Mammary epithelial cell (primary cell): ENCODE measurements at regions of chr11 and their contacts with region 1.

Region 1: DNA sequence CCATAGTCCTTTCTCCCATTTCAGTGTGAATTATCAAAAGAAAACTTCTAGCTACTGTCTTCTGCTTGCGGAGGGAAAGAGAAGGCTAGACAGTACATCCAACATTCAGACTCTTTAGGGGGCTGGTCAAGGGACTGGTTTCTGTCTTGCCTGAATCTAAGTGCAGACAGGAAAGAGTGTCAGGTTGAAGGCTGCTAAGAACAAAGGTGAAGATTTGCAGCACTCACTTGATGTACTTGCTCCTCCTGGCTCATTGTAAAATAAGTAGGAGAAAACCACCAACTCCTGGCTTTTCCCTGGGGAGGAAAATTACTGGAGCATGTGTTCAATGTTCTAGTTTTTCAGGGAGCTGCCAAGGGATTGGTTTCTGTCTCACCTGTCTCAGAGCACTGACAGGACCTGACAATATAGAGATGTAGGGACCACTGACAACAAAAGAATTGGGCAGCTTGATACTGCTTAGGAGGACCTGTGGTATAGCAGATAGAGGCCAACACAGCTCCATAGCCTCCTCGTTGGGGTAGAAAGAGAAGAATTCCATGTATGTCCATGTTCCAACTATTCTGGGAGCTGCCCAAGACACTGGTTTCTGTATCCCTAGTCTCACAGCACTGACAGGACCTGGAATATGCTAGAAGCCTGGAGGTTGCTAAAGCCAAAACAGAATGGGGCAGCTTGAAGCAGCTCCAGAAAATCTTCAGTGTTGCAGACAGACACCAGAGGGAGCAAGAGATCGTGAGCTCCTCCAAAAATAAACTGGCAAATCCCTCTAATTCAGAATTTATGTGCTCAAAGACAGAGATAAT is 39.7 kb upstream of the MMP12 start:
- DNase-seq: peak; percentile 28
- H3K4me3 ChIP-seq: no peak overlapping the region
- H3K27ac ChIP-seq: no peak overlapping the region
- H3K4me1 ChIP-seq: peaks cover 13% of the 10 kb centered on the region
- H3K27me3 ChIP-seq: no peaks in the 10 kb centered on the region
- CTCF ChIP-seq: peak; percentile 74 to 85

Region 2: DNA sequence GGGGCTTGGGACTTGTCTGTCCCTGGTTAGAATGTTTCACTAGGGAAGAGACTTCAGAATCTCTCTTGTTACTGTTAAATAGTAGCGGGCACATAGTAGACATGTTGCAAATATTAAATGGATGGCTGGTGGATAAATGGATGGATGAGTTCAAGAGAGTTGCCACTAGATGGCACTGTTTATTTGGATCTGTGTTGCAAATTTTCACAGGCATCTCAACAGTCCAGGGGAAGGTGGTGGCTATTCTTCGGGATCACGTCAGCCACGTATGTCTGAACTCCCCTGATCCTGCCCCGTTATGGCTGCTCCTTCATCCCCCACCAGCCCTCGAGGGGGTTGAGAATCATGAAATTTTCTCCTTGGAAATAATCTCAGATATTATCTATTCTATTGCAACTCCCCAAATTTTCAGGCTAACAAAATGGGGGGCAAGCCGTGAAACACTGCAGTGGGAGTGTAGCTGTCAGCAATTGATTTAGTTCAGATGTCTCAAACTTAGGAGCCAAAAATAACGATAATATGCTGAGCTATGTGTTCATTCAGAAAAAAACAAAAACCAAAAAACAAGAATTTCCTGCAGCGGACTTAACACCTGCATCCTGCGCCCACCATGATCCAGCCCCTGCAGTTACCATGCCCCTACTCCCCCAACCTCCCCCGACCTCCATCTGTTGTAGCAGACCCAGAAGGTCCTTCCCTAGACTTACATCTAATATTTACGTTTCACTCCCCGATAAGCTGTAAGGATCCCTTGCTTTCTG is 626.3 kb before region 1 on chr11:
- CTCF ChIA-PET with region 1: no interaction called
- dilution Hi-C with region 1: no loop called
- in situ Hi-C with region 1: no loop called
- intact Hi-C with region 1: no loop called
- DNase-seq: peak; percentile 70
- H3K4me3 ChIP-seq: no peak overlapping the region
- H3K27ac ChIP-seq: peak overlapping the region; percentile 15
- H3K4me1 ChIP-seq: peaks cover 10% of the 10 kb centered on the region
- H3K27me3 ChIP-seq: no peaks in the 10 kb centered on the region
- CTCF ChIP-seq: peak; percentile 46 to 71

Region 3: GRCh38 chr11:102705626-102706025 is 208.8 kb before region 1 on chr11 and contains the start of gene MMP27:
- CTCF ChIA-PET with region 1: no interaction called
- dilution Hi-C with region 1: no loop called
- in situ Hi-C with region 1: no loop called
- intact Hi-C with region 1: no loop called
- DNase-seq: no peak
- H3K4me3 ChIP-seq: no peak within 1 kb of the TSS
- H3K27ac ChIP-seq: no peak within 1 kb of the TSS
- H3K4me1 ChIP-seq: peaks cover 3% of the 10 kb centered on the region
- H3K27me3 ChIP-seq: no peaks in the 10 kb centered on the region
- CTCF ChIP-seq: no peak
- total RNA-seq, gene MMP27: not detected

Region 4: GRCh38 chr11:102843474-102843873 is 71.0 kb before region 1 on chr11 and contains the start of gene MMP3:
- CTCF ChIA-PET with region 1: no interaction called
- dilution Hi-C with region 1: no loop called
- in situ Hi-C with region 1: no loop called
- intact Hi-C with region 1: no loop called
- DNase-seq: no peak
- H3K4me3 ChIP-seq: no peak within 1 kb of the TSS
- H3K27ac ChIP-seq: no peak within 1 kb of the TSS
- H3K4me1 ChIP-seq: peaks cover 9% of the 10 kb centered on the region
- H3K27me3 ChIP-seq: no peaks in the 10 kb centered on the region
- CTCF ChIP-seq: no peak
- total RNA-seq, gene MMP3: 5.8 TPM in 1 of 2 donors, not detected in the other

Region 5: DNA sequence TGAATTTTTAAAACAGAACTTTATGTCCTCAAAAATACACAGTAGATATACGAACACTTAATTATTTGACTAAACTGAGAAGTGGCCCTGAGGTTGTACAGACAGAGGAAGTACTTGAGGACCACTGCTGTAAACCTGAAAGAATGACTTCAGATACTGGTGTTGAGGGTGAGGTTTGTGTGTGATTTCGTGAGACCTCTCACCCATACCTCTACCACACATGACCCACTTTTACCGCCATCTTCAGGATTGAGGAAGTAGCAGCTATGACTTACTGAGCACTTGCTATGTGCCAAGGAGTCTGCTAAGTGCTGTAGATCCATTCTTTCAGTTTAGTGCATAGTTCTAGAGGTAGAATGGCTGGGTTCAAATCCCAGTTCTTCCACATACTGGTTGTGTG is 19.2 kb after region 1 on chr11:
- CTCF ChIA-PET with region 1: no interaction called
- dilution Hi-C with region 1: no loop called
- in situ Hi-C with region 1: no loop called
- intact Hi-C with region 1: no loop called
- DNase-seq: no peak
- H3K4me3 ChIP-seq: no peak overlapping the region
- H3K27ac ChIP-seq: no peak overlapping the region
- H3K4me1 ChIP-seq: peaks cover 12% of the 10 kb centered on the region
- H3K27me3 ChIP-seq: no peaks in the 10 kb centered on the region
- CTCF ChIP-seq: no peak

Region 6: DNA sequence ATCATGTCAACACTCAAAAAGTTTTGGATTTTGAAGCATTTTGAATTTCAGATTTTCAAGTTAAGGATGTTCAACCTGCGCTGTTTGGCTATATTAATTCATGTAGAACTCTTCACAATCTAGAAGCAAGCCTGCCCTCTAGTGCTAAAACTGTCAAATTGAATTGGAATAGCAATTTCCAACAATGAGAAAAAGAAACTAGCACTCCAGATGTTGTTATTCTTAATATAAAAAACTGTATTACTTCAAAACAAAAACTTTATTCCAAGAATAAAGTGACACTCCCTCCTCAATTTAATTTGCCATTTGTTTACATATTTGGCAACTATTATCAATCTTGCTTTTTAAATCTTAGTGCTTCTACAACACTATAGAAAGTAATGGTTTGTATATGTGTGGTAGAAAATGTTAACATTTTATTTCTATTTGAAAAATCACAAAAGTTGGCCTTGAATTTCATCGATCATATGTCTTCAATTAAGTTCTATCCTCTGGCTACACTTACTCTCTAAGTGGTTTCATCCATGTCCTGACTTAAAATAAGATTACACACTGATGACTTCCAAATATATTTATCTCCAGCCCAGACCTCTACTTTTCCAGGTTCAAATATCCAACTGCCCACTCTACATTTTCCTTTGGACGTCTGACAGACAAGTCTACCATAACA is 140.9 kb after region 1 on chr11:
- CTCF ChIA-PET with region 1: no interaction called
- dilution Hi-C with region 1: no loop called
- in situ Hi-C with region 1: no loop called
- intact Hi-C with region 1: loop called (anchors 1 kb)
- DNase-seq: peak; percentile 33
- H3K4me3 ChIP-seq: no peak overlapping the region
- H3K27ac ChIP-seq: no peak overlapping the region
- H3K4me1 ChIP-seq: no peaks in the 10 kb centered on the region
- H3K27me3 ChIP-seq: no peaks in the 10 kb centered on the region
- CTCF ChIP-seq: peak; percentile 61 to 67